ENCODE measurements at regions of chr2 and their contacts with region 1.

Region 1: DNA sequence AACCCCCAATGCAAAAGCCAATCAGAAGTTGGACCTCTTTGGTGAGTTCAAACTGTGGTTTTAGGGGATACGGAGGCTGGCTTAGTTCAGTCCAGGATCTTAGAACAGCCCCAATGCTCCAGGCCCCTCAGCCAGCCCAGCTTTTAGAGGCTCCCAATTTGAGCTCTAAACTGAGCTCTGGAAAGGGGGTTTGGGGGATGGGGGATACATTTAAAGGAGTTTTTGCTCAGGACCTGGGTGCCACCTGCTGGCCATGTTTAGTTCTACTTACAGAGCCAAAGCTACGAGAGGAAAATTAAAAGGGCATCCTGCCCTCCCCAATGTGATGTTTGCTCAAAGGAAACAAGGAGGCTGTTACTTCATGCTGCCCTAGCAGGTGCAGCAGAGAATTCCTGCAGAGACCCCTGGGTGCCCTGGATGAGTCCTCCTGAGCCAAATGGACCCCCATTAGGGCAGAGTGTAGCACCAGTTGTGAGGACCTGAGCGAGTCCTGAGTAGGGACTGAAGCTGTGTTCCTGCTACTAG is 15.9 kb upstream of the TMEM214 start:
- DNase-seq: peak; percentile 63
- ATAC-seq: peak; percentile 57
- H3K4me3 ChIP-seq: no peak overlapping the region
- H3K4me3 Mint-ChIP-seq: no peak overlapping the region
- H3K27ac ChIP-seq: no peak overlapping the region
- H3K27ac Mint-ChIP-seq: no peak overlapping the region
- H3K4me1 ChIP-seq: no peaks in the 10 kb centered on the region
- H3K4me1 Mint-ChIP-seq: no peaks in the 10 kb centered on the region
- H3K27me3 ChIP-seq: no peaks in the 10 kb centered on the region
- H3K27me3 Mint-ChIP-seq: no peaks in the 10 kb centered on the region
- CTCF ChIP-seq: peak; percentile 71

Region 2: DNA sequence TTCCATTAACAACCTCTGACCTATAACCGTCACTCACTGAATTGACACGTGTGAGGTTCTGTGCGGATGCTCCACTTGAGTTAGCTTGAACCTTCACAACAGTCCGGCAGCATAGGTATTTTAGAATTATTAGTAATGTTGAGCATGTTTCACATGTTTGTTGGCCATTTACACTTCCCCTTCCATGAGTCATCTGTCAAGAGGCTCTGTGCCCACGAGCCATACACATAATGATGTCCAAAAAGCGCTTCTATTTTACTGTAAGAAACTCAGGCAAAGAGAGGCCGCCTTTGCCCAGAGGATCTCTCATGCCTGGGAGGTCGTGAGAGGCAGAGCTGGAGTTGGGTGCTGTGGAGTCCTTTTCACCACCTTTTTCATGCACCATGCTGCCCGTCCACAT is 13.0 kb before region 1 on chr2:
- CTCF ChIA-PET with region 1: interaction called, 11 read pairs
- POLR2A ChIA-PET with region 1: no interaction called
- intact Hi-C with region 1: no loop called
- DNase-seq: no peak
- ATAC-seq: no peak
- H3K4me3 ChIP-seq: no peak overlapping the region
- H3K4me3 Mint-ChIP-seq: no peak overlapping the region
- H3K27ac ChIP-seq: no peak overlapping the region
- H3K27ac Mint-ChIP-seq: no peak overlapping the region
- H3K4me1 ChIP-seq: no peaks in the 10 kb centered on the region
- H3K4me1 Mint-ChIP-seq: no peaks in the 10 kb centered on the region
- H3K27me3 ChIP-seq: peaks cover 0 to 4% (median 0%) of the 10 kb centered on the region in 4 experiments
- H3K27me3 Mint-ChIP-seq: peaks cover 33% of the 10 kb centered on the region
- CTCF ChIP-seq: no peak

Measured in B cell (primary cell).